ENCODE measurements at regions of chr10 and their contacts with region 1.

Region 1: DNA sequence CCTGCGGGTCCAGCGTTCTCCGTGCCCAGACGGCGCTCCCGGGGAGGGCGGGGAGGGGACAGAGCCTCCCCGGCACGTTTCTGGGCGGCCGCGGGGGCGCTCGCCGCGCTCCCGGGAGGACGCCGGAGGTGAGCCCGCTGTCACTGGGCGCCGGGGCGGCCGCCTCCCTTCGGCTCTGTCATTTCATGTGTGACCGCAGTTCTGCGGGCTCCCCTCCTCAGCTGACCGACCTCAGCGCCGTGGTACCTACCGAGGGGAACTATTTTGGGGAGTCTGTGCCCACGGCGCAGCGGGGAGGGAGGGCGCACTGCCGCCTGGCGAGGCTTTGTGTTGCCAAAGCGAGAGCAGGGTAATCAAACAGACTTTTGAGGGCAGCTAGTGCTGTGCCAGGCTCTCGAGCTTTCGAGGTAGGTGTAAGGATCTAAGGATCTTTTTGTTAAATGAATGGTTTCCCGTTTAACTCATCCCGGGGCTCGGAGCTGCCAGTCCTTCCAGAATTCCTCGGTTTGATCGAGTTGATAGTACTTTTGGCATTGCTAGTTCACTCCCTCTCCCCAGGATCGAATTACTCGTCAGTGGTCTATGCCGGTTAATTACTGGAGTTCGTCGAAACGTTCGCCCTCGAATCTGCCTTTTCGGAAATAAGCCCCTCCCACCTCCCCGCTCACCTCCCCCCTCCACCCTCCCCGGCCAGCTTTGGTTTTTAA is 1.9 kb downstream of the ARID5B start:
- DNase-seq: peak; percentile 35 to 67 (median 57)
- H3K4me3 ChIP-seq: peak overlapping the region; percentile 45
- H3K27ac ChIP-seq: peak overlapping the region; percentile 58 to 79
- H3K4me1 ChIP-seq: no peaks in the 10 kb centered on the region
- H3K27me3 ChIP-seq: no peaks in the 10 kb centered on the region
- CTCF ChIP-seq: peak in 1 of 3 donors; percentile 8
- EP300 ChIP-seq: no peak
- POLR2A ChIP-seq: peak; percentile 21

Region 2: GRCh38 chr10:61992671-61993668 is 89.6 kb after region 1 on chr10:
- intact Hi-C with region 1: loop called in 1 of 4 experiments (anchors 10 kb)
- DNase-seq: peak in 3 of 5 donors; percentile 25 to 70 (median 37)
- H3K4me3 ChIP-seq: no peak overlapping the region
- H3K27ac ChIP-seq: no peak overlapping the region
- H3K4me1 ChIP-seq: peaks cover 8% of the 10 kb centered on the region
- H3K27me3 ChIP-seq: no peaks in the 10 kb centered on the region
- CTCF ChIP-seq: no peak
- EP300 ChIP-seq: peak; percentile 96
- POLR2A ChIP-seq: no peak

Region 3: GRCh38 chr10:62038609-62039190 is 135.3 kb after region 1 on chr10:
- intact Hi-C with region 1: loop called in 2 of 4 experiments (anchors 5 to 10 kb)
- DNase-seq: peak; percentile 72 to 84 (median 79)
- H3K4me3 ChIP-seq: no peak overlapping the region
- H3K27ac ChIP-seq: no peak overlapping the region
- H3K4me1 ChIP-seq: peaks cover 2% of the 10 kb centered on the region
- H3K27me3 ChIP-seq: no peaks in the 10 kb centered on the region
- CTCF ChIP-seq: peak; percentile 71 to 87 (median 78)
- EP300 ChIP-seq: no peak
- POLR2A ChIP-seq: no peak

Region 4: GRCh38 chr10:62048919-62049623 is 145.7 kb after region 1 on chr10:
- intact Hi-C with region 1: loop called in 1 of 4 experiments (anchors 10 kb)
- DNase-seq: peak; percentile 88 to 92 (median 89)
- H3K4me3 ChIP-seq: peak overlapping the region; percentile 76
- H3K27ac ChIP-seq: peak overlapping the region; percentile 70 to 92
- H3K4me1 ChIP-seq: peaks cover 23% of the 10 kb centered on the region
- H3K27me3 ChIP-seq: no peaks in the 10 kb centered on the region
- CTCF ChIP-seq: no peak
- EP300 ChIP-seq: peak; percentile 22
- POLR2A ChIP-seq: peak; percentile 94

Region 5: GRCh38 chr10:62244780-62245467 is 341.6 kb after region 1 on chr10:
- intact Hi-C with region 1: loop called in 1 of 4 experiments (anchors 10 kb)
- DNase-seq: peak in 1 of 5 donors; percentile 53
- H3K4me3 ChIP-seq: no peak overlapping the region
- H3K27ac ChIP-seq: no peak overlapping the region
- H3K4me1 ChIP-seq: peaks cover 3% of the 10 kb centered on the region
- H3K27me3 ChIP-seq: no peaks in the 10 kb centered on the region
- CTCF ChIP-seq: peak; percentile 68 to 84 (median 69)
- EP300 ChIP-seq: no peak
- POLR2A ChIP-seq: no peak